ENCODE measurements at regions of chr12 and their contacts with region 1.

Region 1: GRCh38 chr12:32061033-32061432 is 45.6 kb upstream of the BICD1 start:
- DNase-seq: no peak
- H3K4me3 Mint-ChIP-seq: no peak overlapping the region
- H3K27ac Mint-ChIP-seq: no peak overlapping the region
- H3K4me1 Mint-ChIP-seq: peaks cover 15% of the 10 kb centered on the region
- H3K27me3 Mint-ChIP-seq: no peaks in the 10 kb centered on the region

Region 2: GRCh38 chr12:31651893-31652521 is 409.0 kb before region 1 on chr12:
- CTCF ChIA-PET with region 1: interaction called, 10 read pairs
- POLR2A ChIA-PET with region 1: no interaction called
- DNase-seq: no peak
- H3K4me3 Mint-ChIP-seq: no peak overlapping the region
- H3K27ac Mint-ChIP-seq: peak overlapping the region; percentile 90
- H3K4me1 Mint-ChIP-seq: peaks cover 15% of the 10 kb centered on the region
- H3K27me3 Mint-ChIP-seq: peaks cover 2% of the 10 kb centered on the region

Region 3: GRCh38 chr12:31874961-31875608 is 185.9 kb before region 1 on chr12:
- CTCF ChIA-PET with region 1: no interaction called
- POLR2A ChIA-PET with region 1: no interaction called
- DNase-seq: peak; percentile 42
- H3K4me3 Mint-ChIP-seq: no peak overlapping the region
- H3K27ac Mint-ChIP-seq: peak overlapping the region; percentile 97
- H3K4me1 Mint-ChIP-seq: peaks cover 26% of the 10 kb centered on the region
- H3K27me3 Mint-ChIP-seq: no peaks in the 10 kb centered on the region